Esophagus muscularis mucosa (tissue), 4 donors: ENCODE measurements at regions of chr12 and their contacts with region 1.

Region 1: DNA sequence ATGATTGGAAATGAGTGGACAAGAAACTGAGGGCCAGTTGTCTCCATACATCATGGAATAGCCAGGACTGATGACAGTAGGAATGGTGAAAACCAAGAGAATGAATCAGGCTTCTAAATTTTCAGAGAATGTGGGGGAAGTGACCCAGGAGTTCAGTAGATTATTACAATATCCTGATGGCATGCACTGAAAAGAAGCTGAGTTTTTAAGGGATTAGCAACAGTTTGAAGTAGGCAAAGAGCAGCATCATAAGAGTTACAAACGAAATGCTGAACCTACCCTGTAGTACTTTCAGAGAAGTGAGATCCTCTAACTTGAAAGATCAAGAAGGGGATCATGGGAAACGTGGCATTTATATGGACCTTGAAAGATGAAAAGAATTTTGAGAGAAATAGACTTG is 13.2 kb downstream of the SLC2A14 start:
- DNase-seq: no peak
- H3K4me3 ChIP-seq: no peak overlapping the region
- H3K27ac ChIP-seq: peak overlapping the region in 1 of 4 donors; percentile 85
- H3K4me1 ChIP-seq: peaks cover 0 to 15% (median 11%) of the 10 kb centered on the region in 4 donors
- H3K27me3 ChIP-seq: no peaks in the 10 kb centered on the region
- CTCF ChIP-seq: no peak
- EP300 ChIP-seq: no peak
- POLR2A ChIP-seq: no peak

Region 2: GRCh38 chr12:7231050-7231449 is 628.5 kb before region 1 on chr12:
- intact Hi-C with region 1: no loop called
- DNase-seq: no peak
- H3K4me3 ChIP-seq: no peak overlapping the region
- H3K27ac ChIP-seq: no peak overlapping the region
- H3K4me1 ChIP-seq: no peaks in the 10 kb centered on the region
- H3K27me3 ChIP-seq: no peaks in the 10 kb centered on the region
- CTCF ChIP-seq: no peak
- EP300 ChIP-seq: no peak
- POLR2A ChIP-seq: no peak

Region 3: DNA sequence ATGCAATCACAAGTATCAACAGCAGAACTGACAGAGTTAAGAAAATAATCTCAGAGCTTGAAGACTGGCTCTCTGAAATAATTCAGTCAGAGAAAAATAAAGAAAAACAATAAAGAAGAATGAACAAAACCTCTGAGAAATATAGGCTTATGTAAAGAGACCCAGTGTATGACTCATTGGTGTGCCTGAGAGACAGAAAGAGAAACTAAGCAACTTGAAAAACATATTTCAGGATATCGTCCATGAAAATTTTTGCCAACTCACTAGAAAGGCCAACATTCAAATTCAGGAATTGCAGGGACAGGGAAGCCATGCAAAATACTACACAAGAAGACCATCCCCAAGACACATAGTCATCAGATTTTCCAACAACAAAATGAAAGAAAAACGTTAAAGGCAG is 250.1 kb before region 1 on chr12:
- intact Hi-C with region 1: no loop called
- DNase-seq: no peak
- H3K4me3 ChIP-seq: no peak overlapping the region
- H3K27ac ChIP-seq: no peak overlapping the region
- H3K4me1 ChIP-seq: no peaks in the 10 kb centered on the region
- H3K27me3 ChIP-seq: no peaks in the 10 kb centered on the region
- CTCF ChIP-seq: no peak
- EP300 ChIP-seq: no peak
- POLR2A ChIP-seq: no peak

Region 4: DNA sequence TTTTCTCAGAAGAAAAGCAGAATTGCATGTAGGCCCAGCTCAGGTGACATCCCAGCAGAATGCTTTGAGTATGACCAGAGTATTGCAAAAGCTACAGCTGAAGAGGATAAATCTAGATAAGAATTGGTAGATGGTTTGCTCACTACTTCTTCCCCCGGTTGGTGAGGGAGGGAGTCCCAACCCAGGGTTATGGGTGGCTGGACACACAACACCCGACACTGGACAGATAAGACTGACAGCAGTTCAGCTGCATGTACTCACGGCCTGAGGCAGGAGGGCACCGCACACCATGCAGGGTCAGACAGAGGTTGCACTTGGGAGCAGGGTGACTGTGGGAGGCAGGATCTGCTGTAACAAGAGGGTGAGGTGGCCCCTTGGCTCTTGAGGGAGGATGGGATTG is 110.7 kb before region 1 on chr12:
- intact Hi-C with region 1: no loop called
- DNase-seq: no peak
- H3K4me3 ChIP-seq: no peak overlapping the region
- H3K27ac ChIP-seq: no peak overlapping the region
- H3K4me1 ChIP-seq: no peaks in the 10 kb centered on the region
- H3K27me3 ChIP-seq: no peaks in the 10 kb centered on the region
- CTCF ChIP-seq: no peak
- EP300 ChIP-seq: no peak
- POLR2A ChIP-seq: no peak

Region 5: DNA sequence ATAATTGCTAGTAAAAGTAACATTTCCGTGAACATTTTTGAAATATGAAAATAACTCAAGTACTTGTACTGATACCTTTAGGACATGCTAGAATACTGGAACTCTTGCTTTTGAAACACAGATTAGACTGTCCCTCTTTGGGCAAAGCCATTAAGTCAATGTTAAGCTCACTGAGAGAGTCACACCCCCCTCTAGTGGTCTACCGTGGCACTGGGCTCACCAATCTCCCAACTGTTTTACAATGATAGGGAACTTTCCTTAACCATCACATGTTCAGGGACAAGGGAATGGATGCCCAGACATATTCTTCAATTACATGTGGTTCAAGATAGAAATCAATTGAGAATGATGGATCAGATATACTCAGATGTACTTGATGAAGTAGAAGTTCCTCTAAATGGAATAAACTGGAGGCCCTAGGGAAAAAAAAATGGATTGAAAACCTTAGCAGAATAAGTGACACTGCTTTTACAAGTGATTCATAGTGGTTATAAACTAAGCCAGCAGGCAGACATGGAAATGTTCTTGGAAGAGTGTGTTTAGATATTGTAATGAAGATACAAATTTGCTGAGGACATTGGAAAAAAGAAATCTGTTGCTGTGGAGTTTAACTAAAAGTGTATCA is 52.6 kb before region 1 on chr12:
- intact Hi-C with region 1: no loop called
- DNase-seq: no peak
- H3K4me3 ChIP-seq: no peak overlapping the region
- H3K27ac ChIP-seq: no peak overlapping the region
- H3K4me1 ChIP-seq: peaks cover 0 to 4% (median 0%) of the 10 kb centered on the region in 4 donors
- H3K27me3 ChIP-seq: no peaks in the 10 kb centered on the region
- CTCF ChIP-seq: peak; percentile 67 to 84 (median 71)
- EP300 ChIP-seq: no peak
- POLR2A ChIP-seq: no peak

Region 6: DNA sequence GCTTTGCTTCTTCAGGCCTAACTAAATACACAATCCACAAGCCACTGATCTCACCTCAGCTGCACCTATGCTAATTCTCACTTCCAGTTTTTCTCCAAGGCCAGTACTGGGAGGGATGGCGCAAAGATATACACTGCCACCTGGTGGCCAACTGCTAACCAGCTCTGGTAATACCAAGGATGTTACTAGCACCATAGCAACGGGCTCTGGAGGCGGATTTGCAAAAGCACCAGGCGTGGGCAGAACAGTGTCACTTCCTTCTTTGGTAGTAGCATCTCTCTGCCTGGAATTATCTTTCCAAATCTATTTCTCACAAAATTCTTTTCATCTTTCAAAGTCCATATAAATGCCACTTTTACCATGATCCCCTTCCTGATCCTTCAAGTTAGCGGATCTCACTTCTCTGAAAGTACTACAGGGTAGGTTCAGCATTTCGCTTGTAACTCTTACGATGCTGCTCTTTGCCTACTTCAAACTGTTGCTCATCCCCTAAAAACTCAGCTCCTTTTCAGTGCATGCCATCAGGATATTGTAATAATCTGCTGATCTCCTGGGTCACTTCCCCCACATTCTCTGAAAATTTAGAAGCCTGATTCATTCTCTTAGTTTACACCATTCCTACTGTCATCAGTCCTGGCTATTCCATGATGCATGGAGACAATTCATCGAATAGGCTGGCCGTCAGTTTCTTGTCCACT is 135.9 kb after region 1 on chr12:
- intact Hi-C with region 1: loop called (anchors 2 kb)
- DNase-seq: peak; percentile 95
- H3K4me3 ChIP-seq: no peak overlapping the region
- H3K27ac ChIP-seq: peak overlapping the region; percentile 42 to 69 (median 49)
- H3K4me1 ChIP-seq: no peaks in the 10 kb centered on the region
- H3K27me3 ChIP-seq: no peaks in the 10 kb centered on the region
- CTCF ChIP-seq: peak; percentile 78 to 81 (median 81)
- EP300 ChIP-seq: no peak
- POLR2A ChIP-seq: no peak